Natural killer cell (primary cell): ENCODE measurements at regions of chr17 and their contacts with region 1.

Region 1: DNA sequence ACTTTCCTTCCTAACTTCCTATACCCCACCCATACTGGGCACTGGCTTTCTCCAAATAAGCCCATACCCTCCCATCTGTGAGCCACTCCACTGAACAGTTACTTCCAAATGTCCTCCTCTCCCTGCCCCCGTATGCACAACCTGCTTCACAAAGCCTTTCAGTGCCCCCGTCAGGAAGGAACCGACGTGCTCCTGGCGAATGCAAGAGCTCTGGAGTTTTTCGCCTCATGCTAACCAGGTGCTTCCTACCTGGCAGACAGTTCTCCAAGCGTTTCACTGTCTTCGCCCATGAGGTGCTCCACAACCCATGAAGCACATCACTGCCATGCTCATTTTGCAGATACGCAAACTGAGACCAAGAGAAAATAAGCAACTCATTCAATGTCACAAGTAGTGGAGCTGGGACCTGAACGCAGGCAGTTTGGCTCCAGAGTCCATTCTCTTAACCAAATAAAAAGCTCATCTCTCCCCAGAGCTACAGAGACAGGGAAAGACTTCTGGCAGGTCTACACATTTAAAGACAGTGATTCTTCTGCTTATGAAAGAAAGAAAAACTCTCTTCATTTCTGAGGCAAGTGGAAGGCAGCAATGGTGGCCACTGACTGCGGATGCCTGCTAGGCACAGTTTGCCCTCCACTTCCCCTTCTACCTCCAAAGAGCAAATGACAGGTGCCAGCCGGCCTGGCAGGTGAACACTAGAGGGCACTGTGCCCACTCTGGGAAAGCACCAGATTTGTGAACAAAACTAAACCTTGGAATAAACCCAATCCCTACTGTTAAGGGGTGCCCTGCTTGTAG is 23.8 kb downstream of the SPHK1 start:
- DNase-seq: peak; percentile 56 to 86
- ATAC-seq: peak; percentile 58 to 80 (median 75)
- H3K4me3 ChIP-seq: no peak overlapping the region
- H3K4me3 Mint-ChIP-seq: no peak overlapping the region
- H3K27ac ChIP-seq: no peak overlapping the region
- H3K27ac Mint-ChIP-seq: no peak overlapping the region
- H3K4me1 ChIP-seq: peaks cover 28% of the 10 kb centered on the region
- H3K4me1 Mint-ChIP-seq: peaks cover 27 to 31% of the 10 kb centered on the region in 2 donors
- H3K27me3 ChIP-seq: no peaks in the 10 kb centered on the region
- H3K27me3 Mint-ChIP-seq: no peaks in the 10 kb centered on the region
- CTCF ChIP-seq: peak; percentile 83

Region 2: DNA sequence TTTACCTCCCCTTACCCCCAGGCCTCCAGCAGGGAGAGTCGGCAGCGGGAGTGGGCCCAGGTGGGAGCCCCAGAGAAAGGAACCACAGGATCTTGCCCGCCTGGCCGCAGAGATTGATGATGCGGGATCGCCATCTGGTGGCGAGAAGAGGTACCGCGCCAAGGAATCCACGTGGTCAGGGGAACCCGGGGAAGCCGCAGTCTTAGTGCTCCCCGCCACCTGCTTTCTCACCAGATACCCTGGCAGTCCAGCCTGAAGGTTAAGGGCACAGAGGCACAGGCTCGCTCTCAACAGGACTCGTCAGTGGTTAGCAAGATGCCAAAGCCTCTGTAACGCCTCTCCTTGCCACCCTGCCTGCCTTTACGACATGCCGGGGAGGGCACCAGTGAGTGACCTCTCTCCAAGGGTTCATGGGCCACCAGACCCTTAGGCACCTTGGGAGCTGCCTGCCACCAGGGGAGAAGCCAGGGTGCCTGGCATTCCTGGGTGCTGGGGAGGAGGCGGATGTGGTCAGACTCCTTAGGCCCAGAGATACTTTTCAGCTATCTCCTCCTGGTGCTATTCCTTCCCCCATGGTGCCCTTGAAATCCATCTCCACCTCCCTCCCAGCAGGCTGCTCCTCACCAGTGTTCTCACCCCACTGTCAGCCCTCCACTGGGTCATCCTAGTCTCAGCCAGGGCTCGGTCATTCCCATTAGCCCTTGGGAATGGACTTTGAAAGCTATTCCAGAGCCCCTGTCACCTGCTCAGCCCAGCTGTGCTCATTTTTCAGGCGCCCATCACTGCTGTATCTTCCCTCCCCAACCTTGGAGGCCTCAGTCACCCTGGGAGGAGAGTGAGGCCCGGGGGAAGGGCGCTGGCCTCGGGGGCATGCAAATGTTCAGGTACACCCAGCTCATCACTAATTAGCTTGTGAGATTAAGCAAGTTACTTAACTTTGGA is 98.4 kb after region 1 on chr17:
- intact Hi-C with region 1: loop called (anchors 1 kb)
- DNase-seq: peak; percentile 95
- ATAC-seq: peak; percentile 90 to 92 (median 91)
- H3K4me3 ChIP-seq: no peak overlapping the region
- H3K4me3 Mint-ChIP-seq: no peak overlapping the region
- H3K27ac ChIP-seq: peak overlapping the region; percentile 56
- H3K27ac Mint-ChIP-seq: peak overlapping the region in 1 of 2 donors; percentile 74
- H3K4me1 ChIP-seq: peaks cover 33% of the 10 kb centered on the region
- H3K4me1 Mint-ChIP-seq: peaks cover 12 to 25% of the 10 kb centered on the region in 2 donors
- H3K27me3 ChIP-seq: no peaks in the 10 kb centered on the region
- H3K27me3 Mint-ChIP-seq: no peaks in the 10 kb centered on the region
- CTCF ChIP-seq: peak; percentile 84